CD4-positive, alpha-beta T cell (primary cell): ENCODE measurements at regions of chr2 and their contacts with region 1.

Region 1: DNA sequence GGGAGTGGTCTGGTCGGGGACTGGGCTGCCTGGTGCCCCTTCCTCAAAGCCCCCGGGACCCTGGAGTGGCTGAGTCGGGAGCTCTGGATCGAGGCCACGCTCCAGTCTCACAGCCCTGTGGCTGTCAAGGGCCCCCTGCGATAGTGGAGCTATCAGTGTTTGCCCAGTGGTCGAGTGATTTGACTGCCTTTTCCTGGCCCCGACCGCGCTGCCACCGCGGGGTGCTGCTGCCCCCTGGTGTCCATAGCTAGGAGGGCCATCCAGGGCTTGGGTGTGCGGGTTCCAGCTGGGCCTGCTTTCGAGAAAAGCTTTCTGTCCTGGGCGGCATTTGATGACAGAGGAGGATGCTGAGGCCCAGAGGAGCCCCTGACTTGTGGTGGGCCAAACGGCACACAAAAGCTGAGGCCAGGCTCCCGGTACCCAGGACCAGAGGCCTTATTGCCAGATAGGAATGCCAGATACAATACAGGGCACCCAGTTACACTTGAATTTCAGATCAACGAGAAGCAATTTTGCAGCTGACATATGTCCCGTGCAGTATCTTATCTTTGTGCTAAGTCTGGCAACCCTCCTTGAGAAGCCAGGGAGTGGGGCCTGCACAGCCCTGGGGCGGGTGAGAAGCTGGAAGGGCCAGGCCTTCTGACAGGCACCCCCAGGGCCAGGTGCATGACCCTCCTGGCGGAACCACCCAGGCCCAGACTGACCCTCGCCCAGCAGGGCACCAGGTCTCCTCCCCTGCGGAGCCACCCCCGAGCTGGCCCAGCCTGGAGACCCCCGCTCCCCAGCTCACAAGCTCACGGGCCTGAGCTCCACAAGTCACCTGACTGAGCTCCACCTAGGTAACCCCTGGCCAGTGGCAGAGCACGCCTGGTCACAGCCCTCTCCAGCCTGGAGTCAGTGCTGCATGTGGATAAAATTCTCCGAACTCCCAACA is 13.0 kb downstream of the ODC1 start:
- DNase-seq: peak in 13 of 14 experiments; percentile 50 to 87 (median 65)
- ATAC-seq: peak; percentile 56
- H3K4me3 ChIP-seq: no peak overlapping the region
- H3K4me3 Mint-ChIP-seq: peak overlapping the region; percentile 64
- H3K27ac ChIP-seq: no peak overlapping the region
- H3K27ac Mint-ChIP-seq: no peak overlapping the region
- H3K4me1 ChIP-seq: peaks cover 23% of the 10 kb centered on the region
- H3K4me1 Mint-ChIP-seq: peaks cover 9% of the 10 kb centered on the region
- H3K27me3 ChIP-seq: peaks cover 0 to 6% of the 10 kb centered on the region in 2 experiments
- H3K27me3 Mint-ChIP-seq: no peaks in the 10 kb centered on the region
- CTCF ChIP-seq: peak; percentile 91

Region 2: GRCh38 chr2:9813312-9814133 is 621.6 kb before region 1 on chr2:
- CTCF ChIA-PET with region 1: no interaction called
- POLR2A ChIA-PET with region 1: no interaction called
- intact Hi-C with region 1: loop called (anchors 5 to 10 kb)
- DNase-seq: peak; percentile 40 to 82 (median 60)
- ATAC-seq: peak; percentile 83
- H3K4me3 ChIP-seq: no peak overlapping the region
- H3K4me3 Mint-ChIP-seq: no peak overlapping the region
- H3K27ac ChIP-seq: no peak overlapping the region
- H3K27ac Mint-ChIP-seq: no peak overlapping the region
- H3K4me1 ChIP-seq: peaks cover 10% of the 10 kb centered on the region
- H3K4me1 Mint-ChIP-seq: peaks cover 25% of the 10 kb centered on the region
- H3K27me3 ChIP-seq: no peaks in the 10 kb centered on the region
- H3K27me3 Mint-ChIP-seq: peaks cover 4% of the 10 kb centered on the region
- CTCF ChIP-seq: peak; percentile 86

Region 3: DNA sequence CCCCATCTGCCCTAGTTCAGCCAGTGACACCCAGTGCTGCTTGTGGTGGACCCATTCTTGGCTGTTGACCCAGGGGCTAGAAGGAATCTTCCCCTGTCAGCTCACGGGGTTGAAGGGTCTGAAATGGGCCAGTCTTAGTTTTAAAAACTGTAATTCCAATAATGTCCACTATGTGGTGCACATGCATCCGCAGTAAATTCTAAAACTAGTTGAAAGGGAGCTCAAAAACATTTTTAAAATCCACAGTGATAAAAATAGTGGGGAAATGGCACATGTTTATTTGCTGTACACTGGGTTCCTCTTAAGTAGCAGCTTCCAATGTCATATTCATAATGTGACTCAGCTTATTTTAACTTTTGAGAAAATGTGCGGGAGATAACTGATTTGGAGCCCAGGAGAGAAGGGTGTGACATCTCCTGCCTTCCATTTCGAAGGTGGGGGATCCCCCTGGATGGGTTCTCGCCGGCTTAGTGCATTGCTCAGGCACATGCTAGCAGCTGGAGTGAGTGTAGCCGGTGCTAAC is 450.9 kb before region 1 on chr2:
- CTCF ChIA-PET with region 1: interaction called, 5 read pairs
- POLR2A ChIA-PET with region 1: interaction called, 3 read pairs
- intact Hi-C with region 1: loop called (anchors 5 to 10 kb)
- DNase-seq: peak in 4 of 14 experiments; percentile 24 to 81 (median 71)
- ATAC-seq: peak; percentile 90
- H3K4me3 ChIP-seq: no peak overlapping the region
- H3K4me3 Mint-ChIP-seq: no peak overlapping the region
- H3K27ac ChIP-seq: no peak overlapping the region
- H3K27ac Mint-ChIP-seq: no peak overlapping the region
- H3K4me1 ChIP-seq: peaks cover 7% of the 10 kb centered on the region
- H3K4me1 Mint-ChIP-seq: peaks cover 16% of the 10 kb centered on the region
- H3K27me3 ChIP-seq: no peaks in the 10 kb centered on the region
- H3K27me3 Mint-ChIP-seq: peaks cover 9% of the 10 kb centered on the region
- CTCF ChIP-seq: peak; percentile 83

Region 4: DNA sequence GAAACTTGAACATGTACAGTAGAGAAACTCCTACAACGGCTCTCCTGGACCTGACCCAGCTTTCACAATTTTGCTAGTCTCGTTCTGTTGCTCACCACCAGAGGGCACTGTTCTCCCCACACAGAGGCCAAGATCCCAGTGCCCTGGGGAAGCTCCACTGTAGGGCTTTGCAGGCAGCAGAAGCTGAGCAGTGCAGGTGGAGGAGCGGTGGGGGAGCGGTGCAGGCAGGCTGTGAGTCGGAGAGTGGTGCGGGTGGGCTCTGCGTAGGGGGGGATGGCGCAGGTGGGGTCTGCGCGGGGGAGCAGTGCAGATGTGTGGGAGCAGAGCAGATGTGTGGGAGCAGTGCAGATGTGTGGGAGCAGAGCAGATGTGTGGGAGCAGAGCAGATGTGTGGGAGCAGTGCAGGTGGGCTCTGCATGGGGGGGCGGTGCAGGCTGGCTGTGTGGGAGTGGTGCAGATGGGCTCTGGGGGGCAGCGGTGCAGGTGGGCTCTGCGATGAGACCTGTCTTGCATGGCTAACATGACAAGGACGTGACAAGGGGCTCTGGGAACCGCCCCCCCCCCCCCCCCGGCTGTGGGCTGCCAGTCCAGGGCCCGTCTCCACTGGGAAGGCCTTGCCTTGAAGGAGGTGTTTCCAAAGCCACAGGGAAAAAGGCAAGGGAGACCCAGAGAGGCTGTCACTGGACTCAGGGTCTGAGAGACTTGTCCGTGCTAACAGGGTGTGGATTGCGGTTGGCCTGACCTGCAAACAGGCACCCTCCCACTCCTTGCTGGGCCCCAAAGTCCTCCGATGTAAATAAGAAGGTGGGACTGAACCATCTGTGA is 362.3 kb before region 1 on chr2:
- CTCF ChIA-PET with region 1: interaction called, 64 read pairs
- POLR2A ChIA-PET with region 1: interaction called, 25 read pairs
- intact Hi-C with region 1: loop called (anchors 1 kb)
- DNase-seq: peak; percentile 61 to 91 (median 70)
- ATAC-seq: peak; percentile 98
- H3K4me3 ChIP-seq: no peak overlapping the region
- H3K4me3 Mint-ChIP-seq: no peak overlapping the region
- H3K27ac ChIP-seq: no peak overlapping the region
- H3K27ac Mint-ChIP-seq: no peak overlapping the region
- H3K4me1 ChIP-seq: peaks cover 5% of the 10 kb centered on the region
- H3K4me1 Mint-ChIP-seq: peaks cover 5% of the 10 kb centered on the region
- H3K27me3 ChIP-seq: peaks cover 20 to 36% of the 10 kb centered on the region in 2 experiments
- H3K27me3 Mint-ChIP-seq: peaks cover 47% of the 10 kb centered on the region
- CTCF ChIP-seq: peak; percentile 73

Region 5: DNA sequence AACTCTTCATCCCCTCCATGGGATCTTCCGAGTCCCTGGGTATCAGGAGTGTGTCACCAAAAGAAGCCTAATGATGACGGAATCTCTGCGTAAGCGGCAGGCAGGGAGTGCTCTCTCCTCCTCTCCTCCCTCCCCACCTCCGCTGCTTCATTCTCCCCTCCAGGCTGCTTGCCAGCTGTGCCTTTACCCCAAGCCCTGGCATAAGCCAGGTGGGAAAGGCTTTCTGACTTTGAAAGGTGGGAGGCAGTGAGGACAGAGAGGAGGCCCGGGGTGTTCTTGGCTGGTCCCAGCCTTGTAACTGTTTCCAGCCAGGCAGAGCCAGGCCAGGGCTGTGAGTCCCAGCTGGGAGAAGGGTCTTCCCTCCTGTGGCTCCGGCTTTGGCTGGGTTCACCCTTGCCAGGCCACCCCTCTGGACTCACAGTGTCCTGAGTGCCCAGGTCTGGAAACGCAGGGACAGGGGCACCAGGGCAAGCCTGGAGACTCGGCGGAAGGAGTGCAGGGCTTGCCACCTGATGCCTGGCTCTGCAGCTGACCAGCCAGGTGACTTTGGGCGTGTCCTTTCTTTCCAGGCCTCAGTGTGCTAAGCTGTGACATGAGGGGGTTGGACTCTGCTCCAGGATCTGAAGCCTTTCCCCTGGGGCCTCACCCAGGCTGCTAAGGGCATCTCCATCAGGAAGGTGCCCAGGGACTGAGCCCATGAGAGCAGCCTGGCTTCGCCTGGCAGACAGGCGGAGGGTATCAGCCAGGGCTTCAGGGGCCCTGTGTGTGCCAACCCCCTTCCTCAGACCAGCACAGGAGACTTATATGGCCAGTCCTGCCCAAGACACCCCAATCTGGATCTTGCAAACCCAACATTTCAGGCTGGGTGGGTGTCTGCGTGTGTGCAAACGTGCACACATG is 165.2 kb before region 1 on chr2:
- CTCF ChIA-PET with region 1: interaction called, 5 read pairs
- POLR2A ChIA-PET with region 1: interaction called, 3 read pairs
- intact Hi-C with region 1: loop called in 1 of 2 experiments (anchors 1 kb)
- DNase-seq: no peak
- ATAC-seq: no peak
- H3K4me3 ChIP-seq: no peak overlapping the region
- H3K4me3 Mint-ChIP-seq: no peak overlapping the region
- H3K27ac ChIP-seq: no peak overlapping the region
- H3K27ac Mint-ChIP-seq: no peak overlapping the region
- H3K4me1 ChIP-seq: peaks cover 10% of the 10 kb centered on the region
- H3K4me1 Mint-ChIP-seq: no peaks in the 10 kb centered on the region
- H3K27me3 ChIP-seq: no peaks in the 10 kb centered on the region
- H3K27me3 Mint-ChIP-seq: no peaks in the 10 kb centered on the region
- CTCF ChIP-seq: no peak

Region 6: GRCh38 chr2:10520154-10520553 is 85.0 kb after region 1 on chr2:
- CTCF ChIA-PET with region 1: no interaction called
- POLR2A ChIA-PET with region 1: no interaction called
- intact Hi-C with region 1: no loop called
- DNase-seq: peak in 1 of 14 experiments; percentile 10
- ATAC-seq: peak; percentile 41
- H3K4me3 ChIP-seq: no peak overlapping the region
- H3K4me3 Mint-ChIP-seq: no peak overlapping the region
- H3K27ac ChIP-seq: no peak overlapping the region
- H3K27ac Mint-ChIP-seq: no peak overlapping the region
- H3K4me1 ChIP-seq: no peaks in the 10 kb centered on the region
- H3K4me1 Mint-ChIP-seq: no peaks in the 10 kb centered on the region
- H3K27me3 ChIP-seq: no peaks in the 10 kb centered on the region
- H3K27me3 Mint-ChIP-seq: no peaks in the 10 kb centered on the region
- CTCF ChIP-seq: no peak

Region 7: GRCh38 chr2:10668402-10669012 is 233.4 kb after region 1 on chr2:
- CTCF ChIA-PET with region 1: no interaction called
- POLR2A ChIA-PET with region 1: no interaction called
- intact Hi-C with region 1: loop called in 1 of 2 experiments (anchors 2 kb)
- DNase-seq: peak in 5 of 14 experiments; percentile 14 to 82 (median 72)
- ATAC-seq: peak; percentile 71
- H3K4me3 ChIP-seq: no peak overlapping the region
- H3K4me3 Mint-ChIP-seq: no peak overlapping the region
- H3K27ac ChIP-seq: no peak overlapping the region
- H3K27ac Mint-ChIP-seq: no peak overlapping the region
- H3K4me1 ChIP-seq: no peaks in the 10 kb centered on the region
- H3K4me1 Mint-ChIP-seq: peaks cover 6% of the 10 kb centered on the region
- H3K27me3 ChIP-seq: no peaks in the 10 kb centered on the region
- H3K27me3 Mint-ChIP-seq: no peaks in the 10 kb centered on the region
- CTCF ChIP-seq: peak; percentile 89